ENCODE measurements at regions of chr10 and their contacts with region 1.

Region 1: DNA sequence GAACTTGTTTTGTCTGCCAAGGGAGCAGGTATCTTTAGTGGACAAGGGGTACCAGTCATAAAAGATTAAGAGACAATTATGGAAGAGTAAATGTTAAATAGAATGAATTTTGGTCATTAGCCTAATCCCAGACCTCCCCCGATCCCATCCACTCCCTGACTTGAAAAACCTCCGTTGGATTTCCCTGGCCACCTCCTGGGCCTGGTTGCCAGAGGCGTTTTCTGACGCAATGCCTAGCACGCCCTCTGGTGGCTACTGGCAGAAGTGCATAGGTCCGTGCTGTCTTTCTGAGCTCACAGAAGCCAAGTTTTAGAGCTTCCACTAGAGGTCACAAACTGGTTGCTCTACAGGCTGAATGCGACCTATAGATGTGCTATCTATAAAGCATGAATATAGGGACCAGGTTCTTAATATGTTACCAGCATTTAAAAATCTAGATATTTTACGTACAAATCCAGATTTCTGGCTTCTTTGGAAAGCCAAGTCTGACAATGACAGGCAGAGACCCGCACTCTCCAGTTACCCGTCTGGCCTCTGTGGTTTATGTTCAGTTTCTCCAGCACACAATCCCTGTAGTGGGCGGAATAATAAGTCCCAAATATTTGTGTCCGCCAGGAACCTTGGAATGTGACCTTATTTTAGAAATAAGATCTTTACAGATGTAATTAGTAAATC is 39.8 kb downstream of the SPOCK2 start:
- DNase-seq: peak; percentile 82 to 94 (median 90)
- ATAC-seq: peak; percentile 99
- H3K4me3 ChIP-seq: no peak overlapping the region
- H3K4me3 Mint-ChIP-seq: no peak overlapping the region
- H3K27ac ChIP-seq: no peak overlapping the region
- H3K27ac Mint-ChIP-seq: no peak overlapping the region
- H3K4me1 ChIP-seq: no peaks in the 10 kb centered on the region
- H3K4me1 Mint-ChIP-seq: peaks cover 9% of the 10 kb centered on the region
- H3K27me3 ChIP-seq: no peaks in the 10 kb centered on the region
- H3K27me3 Mint-ChIP-seq: no peaks in the 10 kb centered on the region
- CTCF ChIP-seq: peak; percentile 100

Region 2: GRCh38 chr10:71893920-71894319 is 154.7 kb before region 1 on chr10:
- CTCF ChIA-PET with region 1: interaction called, 4 read pairs
- POLR2A ChIA-PET with region 1: interaction called, 6 read pairs
- intact Hi-C with region 1: loop called (anchors 1 to 5 kb)
- DNase-seq: no peak
- ATAC-seq: no peak
- H3K4me3 ChIP-seq: no peak overlapping the region
- H3K4me3 Mint-ChIP-seq: no peak overlapping the region
- H3K27ac ChIP-seq: no peak overlapping the region
- H3K27ac Mint-ChIP-seq: no peak overlapping the region
- H3K4me1 ChIP-seq: peaks cover 14% of the 10 kb centered on the region
- H3K4me1 Mint-ChIP-seq: peaks cover 21% of the 10 kb centered on the region
- H3K27me3 ChIP-seq: no peaks in the 10 kb centered on the region
- H3K27me3 Mint-ChIP-seq: no peaks in the 10 kb centered on the region
- CTCF ChIP-seq: no peak

Region 3: DNA sequence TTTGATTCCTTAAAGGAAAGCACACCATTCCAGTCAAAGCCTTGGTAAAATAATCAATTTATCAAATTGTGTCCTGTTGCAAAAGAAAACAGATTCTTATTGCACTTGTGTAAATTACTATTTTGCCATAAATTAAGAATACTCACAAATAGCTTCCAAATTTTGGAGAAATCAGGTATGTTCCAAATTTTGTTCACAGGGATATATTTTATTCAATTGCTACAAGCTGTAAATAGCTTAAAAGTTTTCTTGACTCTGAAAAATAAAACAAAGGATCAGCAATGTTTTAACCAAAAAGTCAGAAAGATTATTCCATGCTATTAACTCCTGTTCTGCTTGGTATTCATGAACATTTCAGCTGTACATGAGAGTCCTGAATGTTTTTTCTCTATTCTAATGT is 131.8 kb before region 1 on chr10:
- CTCF ChIA-PET with region 1: no interaction called
- POLR2A ChIA-PET with region 1: no interaction called
- intact Hi-C with region 1: loop called in 1 of 2 experiments (anchors 5 kb)
- DNase-seq: no peak
- ATAC-seq: no peak
- H3K4me3 ChIP-seq: no peak overlapping the region
- H3K4me3 Mint-ChIP-seq: no peak overlapping the region
- H3K27ac ChIP-seq: no peak overlapping the region
- H3K27ac Mint-ChIP-seq: no peak overlapping the region
- H3K4me1 ChIP-seq: no peaks in the 10 kb centered on the region
- H3K4me1 Mint-ChIP-seq: no peaks in the 10 kb centered on the region
- H3K27me3 ChIP-seq: no peaks in the 10 kb centered on the region
- H3K27me3 Mint-ChIP-seq: no peaks in the 10 kb centered on the region
- CTCF ChIP-seq: no peak

Region 4: GRCh38 chr10:72061491-72061890 is 12.9 kb after region 1 on chr10:
- CTCF ChIA-PET with region 1: interaction called, 24 read pairs
- POLR2A ChIA-PET with region 1: interaction called, 18 read pairs
- intact Hi-C with region 1: no loop called
- DNase-seq: peak in 1 of 14 experiments; percentile 39
- ATAC-seq: peak; percentile 18
- H3K4me3 ChIP-seq: no peak overlapping the region
- H3K4me3 Mint-ChIP-seq: peak overlapping the region; percentile 79
- H3K27ac ChIP-seq: no peak overlapping the region
- H3K27ac Mint-ChIP-seq: peak overlapping the region; percentile 95
- H3K4me1 ChIP-seq: peaks cover 10% of the 10 kb centered on the region
- H3K4me1 Mint-ChIP-seq: peaks cover 47% of the 10 kb centered on the region
- H3K27me3 ChIP-seq: no peaks in the 10 kb centered on the region
- H3K27me3 Mint-ChIP-seq: peaks cover 25% of the 10 kb centered on the region
- CTCF ChIP-seq: no peak

Region 5: DNA sequence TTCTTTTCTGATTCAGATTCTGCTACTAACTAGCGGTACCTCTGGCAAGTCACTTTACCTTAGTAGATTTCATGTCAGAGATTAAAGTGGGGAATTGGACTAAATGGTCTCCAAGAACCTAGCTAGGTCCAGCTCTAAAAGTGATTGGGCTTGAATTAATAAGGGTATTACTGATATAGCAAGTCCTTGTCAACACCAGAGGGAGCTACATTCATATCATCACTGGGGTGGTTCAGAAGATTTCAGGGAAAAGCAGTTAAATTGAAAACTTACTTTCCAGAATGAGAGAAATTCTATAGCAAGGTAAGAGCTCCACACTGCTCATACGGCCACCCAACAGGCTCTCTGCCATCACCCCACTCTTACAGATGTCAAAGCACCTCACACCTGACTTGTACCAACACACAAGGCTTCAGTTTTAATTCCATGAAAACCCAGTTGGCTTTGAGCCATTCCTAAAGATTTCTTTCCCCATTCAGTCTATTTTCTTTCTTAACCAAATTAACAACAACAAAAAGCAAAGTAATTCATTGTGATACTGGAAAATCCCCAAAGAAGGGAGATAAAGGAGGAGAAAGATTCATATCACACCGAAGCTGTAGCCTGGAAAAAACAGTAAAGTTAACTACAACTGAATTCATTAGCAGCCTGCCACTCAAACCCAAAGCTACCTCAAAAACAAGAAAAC is 77.7 kb after region 1 on chr10:
- CTCF ChIA-PET with region 1: interaction called, 10 read pairs
- POLR2A ChIA-PET with region 1: interaction called, 4 read pairs
- intact Hi-C with region 1: no loop called
- DNase-seq: peak in 3 of 14 experiments; percentile 53 to 60 (median 58)
- ATAC-seq: peak; percentile 26
- H3K4me3 ChIP-seq: no peak overlapping the region
- H3K4me3 Mint-ChIP-seq: no peak overlapping the region
- H3K27ac ChIP-seq: no peak overlapping the region
- H3K27ac Mint-ChIP-seq: peak overlapping the region; percentile 43
- H3K4me1 ChIP-seq: peaks cover 11% of the 10 kb centered on the region
- H3K4me1 Mint-ChIP-seq: peaks cover 58% of the 10 kb centered on the region
- H3K27me3 ChIP-seq: no peaks in the 10 kb centered on the region
- H3K27me3 Mint-ChIP-seq: no peaks in the 10 kb centered on the region
- CTCF ChIP-seq: peak; percentile 42

Region 6: DNA sequence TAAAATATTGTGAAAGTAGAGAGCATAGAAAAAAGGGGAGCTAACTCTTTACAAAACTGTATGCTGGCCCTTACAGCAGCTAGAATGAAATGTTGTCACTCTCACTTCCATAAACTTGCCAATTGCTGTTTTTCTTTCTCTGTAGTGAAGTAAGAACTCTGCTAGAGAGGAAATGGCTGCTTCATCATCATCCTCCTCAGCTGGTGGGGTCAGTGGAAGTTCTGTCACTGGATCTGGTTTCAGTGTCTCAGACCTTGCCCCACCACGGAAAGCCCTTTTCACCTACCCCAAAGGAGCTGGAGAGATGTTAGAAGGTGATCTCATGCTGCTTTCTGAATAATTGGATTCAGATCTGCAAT is 175.1 kb after region 1 on chr10:
- CTCF ChIA-PET with region 1: interaction called, 10 read pairs
- POLR2A ChIA-PET with region 1: interaction called, 3 read pairs
- intact Hi-C with region 1: loop called (anchors 2 to 5 kb)
- DNase-seq: peak in 2 of 14 experiments; percentile 48 to 53
- ATAC-seq: no peak
- H3K4me3 ChIP-seq: no peak overlapping the region
- H3K4me3 Mint-ChIP-seq: peak overlapping the region; percentile 7
- H3K27ac ChIP-seq: no peak overlapping the region
- H3K27ac Mint-ChIP-seq: peak overlapping the region; percentile 53
- H3K4me1 ChIP-seq: peaks cover 44% of the 10 kb centered on the region
- H3K4me1 Mint-ChIP-seq: peaks cover 54% of the 10 kb centered on the region
- H3K27me3 ChIP-seq: no peaks in the 10 kb centered on the region
- H3K27me3 Mint-ChIP-seq: no peaks in the 10 kb centered on the region
- CTCF ChIP-seq: no peak

Region 7: GRCh38 chr10:72254813-72255568 is 206.4 kb after region 1 on chr10:
- CTCF ChIA-PET with region 1: no interaction called
- POLR2A ChIA-PET with region 1: no interaction called
- intact Hi-C with region 1: no loop called
- DNase-seq: peak in 7 of 14 experiments; percentile 32 to 71 (median 58)
- ATAC-seq: peak; percentile 73
- H3K4me3 ChIP-seq: peak overlapping the region; percentile 13
- H3K4me3 Mint-ChIP-seq: peak overlapping the region; percentile 79
- H3K27ac ChIP-seq: peak overlapping the region in 1 of 2 donors; percentile 35
- H3K27ac Mint-ChIP-seq: peak overlapping the region; percentile 96
- H3K4me1 ChIP-seq: peaks cover 90% of the 10 kb centered on the region
- H3K4me1 Mint-ChIP-seq: peaks cover 78% of the 10 kb centered on the region
- H3K27me3 ChIP-seq: no peaks in the 10 kb centered on the region
- H3K27me3 Mint-ChIP-seq: no peaks in the 10 kb centered on the region
- CTCF ChIP-seq: no peak

Region 8: DNA sequence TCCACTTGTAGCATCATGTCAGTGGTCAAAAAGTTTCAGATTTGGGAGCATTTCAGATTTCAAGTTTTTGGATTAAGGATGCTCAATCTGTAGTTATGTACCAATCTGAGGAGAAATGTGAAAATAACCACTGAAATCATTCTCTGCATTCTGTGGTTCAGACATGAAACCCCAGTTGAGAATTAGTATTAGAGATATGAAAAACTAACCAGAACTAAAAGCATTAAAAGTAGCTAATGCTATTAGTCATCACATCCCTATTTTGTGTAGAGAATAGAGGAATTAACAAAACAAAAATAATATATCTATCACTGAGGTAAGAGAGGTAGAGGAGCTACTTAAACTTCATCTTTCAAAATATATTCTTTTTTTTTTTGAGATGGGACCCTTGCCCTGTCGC is 549.3 kb after region 1 on chr10:
- CTCF ChIA-PET with region 1: no interaction called
- POLR2A ChIA-PET with region 1: no interaction called
- intact Hi-C with region 1: no loop called
- DNase-seq: no peak
- ATAC-seq: no peak
- H3K4me3 ChIP-seq: no peak overlapping the region
- H3K4me3 Mint-ChIP-seq: no peak overlapping the region
- H3K27ac ChIP-seq: no peak overlapping the region
- H3K27ac Mint-ChIP-seq: no peak overlapping the region
- H3K4me1 ChIP-seq: no peaks in the 10 kb centered on the region
- H3K4me1 Mint-ChIP-seq: no peaks in the 10 kb centered on the region
- H3K27me3 ChIP-seq: no peaks in the 10 kb centered on the region
- H3K27me3 Mint-ChIP-seq: no peaks in the 10 kb centered on the region
- CTCF ChIP-seq: no peak

Measured in CD4-positive, alpha-beta T cell (primary cell).